ENCODE measurements at regions of chr19 and their contacts with region 1.

Region 1: DNA sequence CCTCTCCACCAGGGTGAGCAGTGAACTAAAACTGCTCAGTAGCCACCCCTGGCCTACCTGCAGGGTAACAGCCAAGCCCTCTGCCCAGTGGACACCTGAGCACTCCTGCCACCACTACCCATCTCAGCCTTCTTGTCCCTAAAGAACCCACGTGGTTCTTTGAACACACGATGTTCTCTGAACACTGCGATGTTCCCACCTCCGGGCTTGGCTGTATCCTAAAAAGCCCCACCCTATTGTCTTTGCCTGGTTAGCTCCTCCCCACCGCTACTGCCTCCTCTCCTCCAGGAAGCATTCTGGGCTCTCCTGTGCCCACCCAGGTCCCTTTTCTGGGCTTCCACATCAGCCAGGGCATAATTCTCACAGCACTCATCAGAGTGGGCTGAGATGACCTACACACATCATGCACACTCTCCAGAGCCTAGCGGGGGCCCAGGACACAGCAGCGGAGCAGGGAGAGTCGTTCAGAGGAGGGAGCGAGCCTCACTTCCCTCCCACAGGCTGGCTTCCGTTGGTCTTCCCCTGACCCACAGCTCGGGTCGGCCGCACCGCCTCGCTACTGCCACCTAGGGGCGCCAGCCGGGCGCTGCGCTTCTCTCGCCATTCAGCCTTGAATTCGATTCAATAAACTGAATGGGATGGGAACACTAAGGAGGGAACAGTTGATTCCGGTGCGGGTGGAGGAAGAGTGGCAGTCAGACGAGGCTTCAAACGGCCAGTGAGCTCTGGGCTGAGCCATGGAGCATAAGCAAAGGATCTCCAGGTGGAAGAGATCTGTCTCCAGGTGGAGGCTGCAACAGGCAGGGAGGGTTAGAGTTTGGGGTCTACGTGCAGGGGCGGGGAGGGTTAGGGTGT is 3.2 kb downstream of the ELAVL1 start:
- DNase-seq: peak; percentile 60 to 80
- ATAC-seq: peak; percentile 67

Region 2: DNA sequence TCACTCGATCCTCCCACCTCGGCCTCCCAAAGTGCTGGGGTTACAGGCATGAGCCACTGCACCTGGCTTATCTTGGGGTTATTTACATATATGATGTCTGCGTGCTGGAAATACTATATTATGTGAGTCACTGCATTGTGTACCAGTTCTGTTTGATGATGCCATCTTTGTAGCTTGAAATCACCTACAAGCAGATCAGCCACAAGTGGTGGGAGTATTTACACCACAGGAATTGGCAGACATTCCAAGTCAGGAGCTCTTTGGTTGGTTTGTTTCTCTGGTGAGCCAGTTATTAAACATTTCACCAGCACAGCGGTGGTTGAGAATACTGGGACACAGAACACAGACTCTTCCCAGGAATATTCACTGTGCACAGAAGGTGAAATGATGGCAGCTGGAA is 54.3 kb before region 1 on chr19:
- intact Hi-C with region 1: loop called in 1 of 2 experiments (anchors 5 kb)
- DNase-seq: no peak
- ATAC-seq: no peak

Region 3: GRCh38 chr19:8095903-8096470 is 93.8 kb after region 1 on chr19:
- intact Hi-C with region 1: no loop called
- DNase-seq: no peak
- ATAC-seq: no peak

Measured in left colon (tissue), 2 donors.